ENCODE measurements at regions of chr12 and their contacts with region 1.

Region 1: DNA sequence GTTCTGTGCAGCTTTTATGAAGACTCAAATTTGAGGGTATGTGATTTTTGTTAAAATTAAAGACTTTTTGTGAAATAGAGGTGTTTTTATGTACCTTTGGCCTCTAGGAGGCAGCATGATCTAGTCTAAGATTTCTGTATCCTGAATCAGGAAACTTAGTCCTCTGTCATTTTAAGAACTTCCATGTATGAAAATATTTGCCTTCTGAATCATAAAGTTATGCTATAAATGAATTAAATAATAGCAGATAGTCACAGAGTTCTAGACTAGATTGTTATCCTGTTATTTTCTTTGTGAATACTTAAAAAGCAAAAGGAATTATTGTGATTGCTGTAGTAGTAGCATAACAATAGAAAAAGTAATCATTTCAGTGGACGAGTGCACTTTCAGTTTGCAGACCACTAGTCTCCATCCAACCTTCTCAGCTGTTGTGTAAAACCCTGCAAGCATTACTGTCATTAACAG is 56.3 kb downstream of the FGD4 start:
- DNase-seq: peak; percentile 66 to 81
- ATAC-seq: peak; percentile 73 to 74
- H3K4me3 ChIP-seq: peak overlapping the region; percentile 28; the same call in 2 of the 3 replicates
- H3K27ac ChIP-seq: peak overlapping the region; percentile 69 to 82; a peak in 4 of 6 replicates
- H3K4me1 ChIP-seq: peaks cover 60% of the 10 kb centered on the region
- CTCF ChIP-seq: peak; percentile 89
- EP300 ChIP-seq: no peak
- POLR2A ChIP-seq: no peak
- RAD21 ChIP-seq: peak; percentile 91 to 92

Region 2: DNA sequence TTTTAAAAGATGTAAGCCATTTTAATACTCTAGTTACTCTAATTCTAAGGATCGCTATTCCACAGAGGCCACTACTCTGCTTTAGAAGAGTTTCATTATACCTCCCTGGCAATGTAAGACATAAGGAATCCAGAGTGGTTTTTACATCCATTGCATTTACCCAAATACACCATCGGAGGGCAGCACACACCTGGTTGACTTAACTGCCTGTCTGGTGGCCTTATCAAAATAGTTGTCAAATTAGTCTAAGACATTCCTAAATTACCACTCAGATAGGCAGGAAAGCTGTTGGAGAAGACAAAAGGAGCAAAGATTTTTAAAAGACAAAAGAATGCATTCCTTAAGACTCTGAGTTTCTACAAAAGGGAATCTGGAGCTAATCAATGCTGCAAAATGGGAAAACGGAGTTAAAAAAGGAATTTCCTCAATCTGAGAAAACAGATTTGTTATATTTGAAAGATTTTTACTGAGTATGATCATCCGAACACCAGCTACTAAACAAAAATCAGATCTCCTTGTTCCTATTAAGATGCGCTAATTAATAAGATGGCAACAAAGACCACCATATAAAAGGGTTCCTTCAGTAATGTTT is 90.1 kb before region 1 on chr12:
- CTCF ChIA-PET with region 1: interaction called, 13 read pairs
- POLR2A ChIA-PET with region 1: no interaction called
- DNase-seq: peak; percentile 49 to 81
- ATAC-seq: peak; percentile 76 to 85; a peak in 5 of 6 replicates
- H3K4me3 ChIP-seq: no peak overlapping the region
- H3K27ac ChIP-seq: no peak overlapping the region; a peak in 1 of 6 replicates
- H3K4me1 ChIP-seq: peaks cover 15% of the 10 kb centered on the region; the same call in 2 of the 3 replicates
- CTCF ChIP-seq: peak; percentile 91
- EP300 ChIP-seq: no peak
- POLR2A ChIP-seq: no peak
- RAD21 ChIP-seq: peak; percentile 94 to 96

Region 3: GRCh38 chr12:32431025-32431424 is 24.6 kb before region 1 on chr12:
- CTCF ChIA-PET with region 1: interaction called, 25 read pairs
- POLR2A ChIA-PET with region 1: no interaction called
- DNase-seq: no peak
- ATAC-seq: no peak
- H3K4me3 ChIP-seq: no peak overlapping the region
- H3K27ac ChIP-seq: no peak overlapping the region
- H3K4me1 ChIP-seq: peaks cover 10% of the 10 kb centered on the region
- CTCF ChIP-seq: no peak
- EP300 ChIP-seq: no peak
- POLR2A ChIP-seq: no peak
- RAD21 ChIP-seq: no peak

Region 4: DNA sequence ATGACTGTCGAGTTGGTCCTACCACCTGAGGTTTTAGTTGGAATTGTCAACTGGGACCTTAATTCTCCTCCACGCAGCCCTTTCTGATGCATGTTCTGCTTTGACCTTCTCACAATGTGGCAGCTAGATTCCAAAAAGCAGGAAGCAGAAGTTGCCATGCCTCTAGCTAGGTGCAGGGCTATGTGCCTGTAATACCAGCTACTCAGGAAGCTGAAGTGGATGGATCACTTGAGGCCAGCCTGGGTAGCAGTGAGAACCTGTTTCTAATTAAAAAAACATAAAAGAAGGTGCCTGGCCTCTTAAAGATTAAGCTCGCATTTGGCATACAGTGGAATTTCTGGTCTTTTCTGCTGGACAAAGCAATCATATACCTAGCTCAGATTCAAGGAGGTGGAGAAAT is 20.8 kb after region 1 on chr12:
- CTCF ChIA-PET with region 1: interaction called, 11 read pairs
- POLR2A ChIA-PET with region 1: no interaction called
- DNase-seq: no peak
- ATAC-seq: no peak
- H3K4me3 ChIP-seq: no peak overlapping the region
- H3K27ac ChIP-seq: no peak overlapping the region
- H3K4me1 ChIP-seq: peaks cover 13% of the 10 kb centered on the region
- CTCF ChIP-seq: no peak
- EP300 ChIP-seq: no peak
- POLR2A ChIP-seq: no peak
- RAD21 ChIP-seq: no peak

Region 5: DNA sequence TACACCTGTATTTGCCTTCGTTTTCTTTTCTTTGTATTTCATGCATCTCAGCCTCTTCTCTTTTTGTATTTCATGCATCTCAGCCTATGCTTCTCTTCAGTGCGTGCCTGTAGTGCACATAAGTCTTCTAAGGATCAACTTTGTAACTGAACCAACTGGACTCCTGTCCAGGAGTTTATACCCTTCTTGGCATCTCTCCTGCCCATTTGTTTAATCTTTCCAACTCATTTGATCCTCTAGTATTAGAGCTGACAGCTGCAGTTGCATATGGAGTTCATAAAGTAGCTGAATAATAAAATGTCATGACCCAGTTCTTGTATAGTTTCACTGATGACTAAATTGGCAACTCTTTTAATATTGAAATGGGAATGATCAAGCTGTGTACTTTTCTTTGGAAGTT is 33.4 kb after region 1 on chr12:
- CTCF ChIA-PET with region 1: no interaction called
- POLR2A ChIA-PET with region 1: no interaction called
- DNase-seq: no peak
- ATAC-seq: no peak
- H3K4me3 ChIP-seq: no peak overlapping the region
- H3K27ac ChIP-seq: no peak overlapping the region
- H3K4me1 ChIP-seq: peaks cover 8% of the 10 kb centered on the region; the same call in 1 of the 3 replicates
- CTCF ChIP-seq: no peak
- EP300 ChIP-seq: no peak
- POLR2A ChIP-seq: no peak
- RAD21 ChIP-seq: no peak

Region 6: GRCh38 chr12:32671930-32672780 is 216.5 kb after region 1 on chr12:
- CTCF ChIA-PET with region 1: interaction called, 46 read pairs
- POLR2A ChIA-PET with region 1: no interaction called
- DNase-seq: peak; percentile 61 to 73
- ATAC-seq: peak; percentile 87 to 90
- H3K4me3 ChIP-seq: no peak overlapping the region
- H3K27ac ChIP-seq: no peak overlapping the region
- H3K4me1 ChIP-seq: no peaks in the 10 kb centered on the region
- CTCF ChIP-seq: peak; percentile 80
- EP300 ChIP-seq: no peak
- POLR2A ChIP-seq: no peak
- RAD21 ChIP-seq: peak; percentile 90 to 93